Activated T-helper 1 cell treated with anti-CD3 and anti-CD28 coated beads, Interleukin-12 subunit alpha, Interleukin-12 subunit beta, Interleukin-2, Interleukin-4 antibody, amounts not matched to agents 30 ng/mL and 10 ng/mL and 1 ng/mL, durations not matched to agents 14 hours and 24 hours and 36 hours (primary cell): ENCODE measurements at regions of chr2 and their contacts with region 1.

Region 1: DNA sequence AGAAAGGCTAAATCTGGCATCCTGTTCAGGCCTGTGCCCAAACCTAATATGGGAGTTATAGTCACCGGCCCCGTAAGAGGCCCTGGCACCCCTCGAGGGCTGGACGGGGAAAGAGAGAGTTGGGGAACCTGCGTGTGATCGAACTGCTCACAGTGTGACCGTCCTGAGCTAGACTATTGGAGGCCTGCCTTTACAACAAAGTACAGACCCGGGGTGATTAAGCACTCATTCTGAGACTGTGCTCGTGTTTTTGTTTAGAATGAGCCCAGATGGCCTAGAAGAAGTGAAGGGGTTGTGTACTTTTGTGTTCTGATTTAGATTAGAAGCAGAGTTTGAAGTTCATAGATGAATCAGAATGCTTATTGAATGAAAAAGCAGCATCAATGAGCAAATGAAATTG is 115.3 kb downstream of the ACOXL start:
- DNase-seq: no peak
- H3K4me3 Mint-ChIP-seq: no peak overlapping the region
- H3K27ac Mint-ChIP-seq: peak overlapping the region; percentile 96
- H3K4me1 Mint-ChIP-seq: peaks cover 88% of the 10 kb centered on the region
- H3K27me3 Mint-ChIP-seq: peaks cover 6% of the 10 kb centered on the region

Region 2: DNA sequence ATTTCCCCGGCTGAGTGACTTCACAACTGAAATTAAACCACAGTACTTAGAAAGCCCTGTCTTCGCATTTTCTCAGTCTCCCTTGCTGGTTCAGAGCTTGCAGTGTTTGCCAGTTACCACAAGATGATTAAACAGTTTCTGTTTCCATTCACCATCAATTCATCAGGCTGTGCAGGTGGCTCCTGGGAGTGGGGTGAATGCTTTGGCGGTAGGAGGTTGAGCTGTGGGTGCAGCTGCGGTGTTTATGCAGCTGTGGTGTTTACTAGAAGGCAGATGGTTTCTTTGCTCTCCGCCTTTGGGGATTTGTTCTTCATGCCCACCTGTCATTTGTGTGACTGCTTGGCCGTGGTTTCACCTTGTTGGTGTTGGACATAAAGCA is 99.2 kb before region 1 on chr2:
- intact Hi-C with region 1: loop called (anchors 1 kb)
- DNase-seq: peak; percentile 78
- H3K4me3 Mint-ChIP-seq: peak overlapping the region; percentile 50
- H3K27ac Mint-ChIP-seq: peak overlapping the region; percentile 35
- H3K4me1 Mint-ChIP-seq: peaks cover 47% of the 10 kb centered on the region
- H3K27me3 Mint-ChIP-seq: peaks cover 19% of the 10 kb centered on the region

Region 3: DNA sequence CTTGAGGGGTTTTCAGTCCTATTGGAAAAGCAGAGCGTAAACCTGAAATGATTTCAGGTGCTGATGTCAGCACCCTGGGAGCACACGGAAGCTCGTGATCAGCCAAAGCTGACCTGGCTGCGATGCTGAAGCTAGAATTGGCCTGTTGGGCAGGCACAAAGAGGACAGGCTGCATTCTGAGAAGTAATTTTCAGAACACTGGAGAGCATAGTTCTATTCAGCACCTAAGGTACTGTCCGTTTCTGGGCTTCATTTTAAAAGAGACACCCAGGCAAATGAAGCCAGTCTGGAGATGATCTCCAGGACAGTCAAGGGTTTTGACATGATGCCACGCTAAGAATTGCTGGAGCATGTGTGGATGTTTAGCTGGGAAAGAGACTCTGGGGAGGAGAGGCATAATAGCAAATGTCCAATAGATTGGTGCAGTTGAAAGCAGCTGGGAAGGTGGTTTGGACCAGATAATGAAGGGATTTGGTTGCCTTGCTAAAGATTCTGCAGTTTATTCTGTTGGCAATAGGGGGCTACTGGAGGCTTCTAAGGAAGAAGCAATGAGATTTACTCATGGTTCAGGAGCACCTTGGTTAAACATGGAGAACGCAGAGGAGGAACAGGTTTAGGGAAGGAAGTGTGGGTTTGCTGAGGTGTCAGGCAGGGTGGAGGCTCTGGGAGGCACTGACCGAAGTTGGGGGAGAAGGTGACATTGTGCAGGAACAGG is 28.7 kb before region 1 on chr2:
- intact Hi-C with region 1: no loop called
- DNase-seq: no peak
- H3K4me3 Mint-ChIP-seq: no peak overlapping the region
- H3K27ac Mint-ChIP-seq: no peak overlapping the region
- H3K4me1 Mint-ChIP-seq: peaks cover 7% of the 10 kb centered on the region
- H3K27me3 Mint-ChIP-seq: peaks cover 56% of the 10 kb centered on the region

Region 4: DNA sequence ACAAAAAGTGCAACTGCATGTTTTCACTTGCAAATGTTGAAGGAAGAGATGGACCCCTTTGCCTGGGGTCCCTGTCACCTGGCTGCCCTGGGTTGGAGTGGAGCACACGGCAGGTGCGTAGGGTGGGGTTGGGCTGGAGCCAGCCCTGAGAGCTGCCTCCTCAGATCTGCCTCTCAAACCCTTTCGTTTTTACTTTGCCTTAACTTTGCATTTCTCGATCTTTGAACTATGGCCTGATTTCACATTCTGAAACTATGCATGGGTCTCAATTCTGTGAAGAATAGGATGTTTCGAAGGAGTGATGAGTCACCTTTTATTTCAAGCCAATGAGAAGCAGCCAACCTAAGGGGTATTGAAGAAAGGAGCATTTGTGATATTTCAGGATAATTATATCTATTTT is 17.5 kb after region 1 on chr2:
- intact Hi-C with region 1: loop called (anchors 1 kb)
- DNase-seq: no peak
- H3K4me3 Mint-ChIP-seq: peak overlapping the region; percentile 48
- H3K27ac Mint-ChIP-seq: peak overlapping the region; percentile 32
- H3K4me1 Mint-ChIP-seq: peaks cover 76% of the 10 kb centered on the region
- H3K27me3 Mint-ChIP-seq: peaks cover 19% of the 10 kb centered on the region

Region 5: GRCh38 chr2:110881908-110882307 is 34.3 kb after region 1 on chr2:
- intact Hi-C with region 1: loop called (anchors 1 kb)
- DNase-seq: no peak
- H3K4me3 Mint-ChIP-seq: no peak overlapping the region
- H3K27ac Mint-ChIP-seq: peak overlapping the region; percentile 19
- H3K4me1 Mint-ChIP-seq: peaks cover 22% of the 10 kb centered on the region
- H3K27me3 Mint-ChIP-seq: peaks cover 45% of the 10 kb centered on the region

Region 6: GRCh38 chr2:111049792-111050640 is 202.4 kb after region 1 on chr2:
- intact Hi-C with region 1: loop called (anchors 1 kb)
- DNase-seq: no peak
- H3K4me3 Mint-ChIP-seq: peak overlapping the region; percentile 24
- H3K27ac Mint-ChIP-seq: peak overlapping the region; percentile 82
- H3K4me1 Mint-ChIP-seq: peaks cover 48% of the 10 kb centered on the region
- H3K27me3 Mint-ChIP-seq: peaks cover 9% of the 10 kb centered on the region

Region 7: DNA sequence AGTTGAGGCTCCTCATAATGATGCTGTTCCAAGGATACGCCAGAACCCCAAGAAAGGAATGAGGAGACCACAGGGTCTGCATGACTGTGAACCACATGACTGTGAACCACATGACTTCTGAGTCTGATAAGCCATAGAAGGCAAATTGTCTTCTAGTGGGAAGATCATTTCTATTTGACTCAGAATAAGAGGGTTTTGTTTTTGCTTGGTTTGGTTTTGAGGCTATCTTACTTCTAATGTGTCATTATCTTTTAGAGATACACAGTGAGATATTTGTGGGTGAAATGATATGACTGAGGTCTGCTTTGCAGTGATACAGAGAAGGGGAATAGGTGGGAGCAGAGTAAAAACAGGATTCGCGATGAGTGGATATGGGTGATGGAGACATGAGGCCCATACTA is 244.2 kb after region 1 on chr2:
- intact Hi-C with region 1: loop called (anchors 1 kb)
- DNase-seq: no peak
- H3K4me3 Mint-ChIP-seq: no peak overlapping the region
- H3K27ac Mint-ChIP-seq: no peak overlapping the region
- H3K4me1 Mint-ChIP-seq: peaks cover 14% of the 10 kb centered on the region
- H3K27me3 Mint-ChIP-seq: peaks cover 61% of the 10 kb centered on the region

Region 8: GRCh38 chr2:111705711-111706336 is 858.2 kb after region 1 on chr2:
- intact Hi-C with region 1: loop called (anchors 1 kb)
- DNase-seq: peak; percentile 65
- H3K4me3 Mint-ChIP-seq: peak overlapping the region; percentile 62
- H3K27ac Mint-ChIP-seq: peak overlapping the region; percentile 86
- H3K4me1 Mint-ChIP-seq: peaks cover 93% of the 10 kb centered on the region
- H3K27me3 Mint-ChIP-seq: peaks cover 2% of the 10 kb centered on the region